T-cell (primary cell): ENCODE measurements at regions of chr11 and their contacts with region 1.

Region 1: DNA sequence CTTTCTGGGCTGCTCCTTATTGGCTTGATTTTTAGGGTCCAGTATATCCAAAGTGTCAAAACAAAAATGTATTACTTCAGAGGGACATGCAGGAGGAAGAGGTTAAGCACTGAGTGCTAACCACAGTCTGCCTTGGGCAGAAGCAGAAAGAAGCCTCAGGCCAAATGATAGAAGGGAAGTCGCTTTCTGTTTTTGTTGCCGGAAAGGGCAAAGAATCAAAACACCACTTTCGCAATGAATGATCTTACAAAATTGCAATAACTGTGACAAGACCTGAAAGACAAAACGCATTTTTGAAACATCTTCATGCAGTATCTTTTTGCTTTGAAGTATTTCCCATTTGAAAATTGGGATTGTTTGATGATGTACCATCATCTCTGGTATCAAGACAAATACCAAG is 70.1 kb upstream of the PICALM start:
- DNase-seq: peak in 9 of 35 experiments; percentile 11 to 44 (median 16)
- ATAC-seq: peak; percentile 58 to 80 (median 66)
- H3K4me3 ChIP-seq: no peak overlapping the region
- H3K4me3 Mint-ChIP-seq: peak overlapping the region; percentile 37 to 62 (median 56)
- H3K27ac ChIP-seq: peak overlapping the region; percentile 59
- H3K27ac Mint-ChIP-seq: peak overlapping the region; percentile 93 to 94
- H3K4me1 ChIP-seq: peaks cover 5 to 34% of the 10 kb centered on the region in 2 experiments
- H3K4me1 Mint-ChIP-seq: peaks cover 12 to 48% (median 46%) of the 10 kb centered on the region in 3 donors
- H3K27me3 ChIP-seq: no peaks in the 10 kb centered on the region
- H3K27me3 Mint-ChIP-seq: no peaks in the 10 kb centered on the region

Region 2: DNA sequence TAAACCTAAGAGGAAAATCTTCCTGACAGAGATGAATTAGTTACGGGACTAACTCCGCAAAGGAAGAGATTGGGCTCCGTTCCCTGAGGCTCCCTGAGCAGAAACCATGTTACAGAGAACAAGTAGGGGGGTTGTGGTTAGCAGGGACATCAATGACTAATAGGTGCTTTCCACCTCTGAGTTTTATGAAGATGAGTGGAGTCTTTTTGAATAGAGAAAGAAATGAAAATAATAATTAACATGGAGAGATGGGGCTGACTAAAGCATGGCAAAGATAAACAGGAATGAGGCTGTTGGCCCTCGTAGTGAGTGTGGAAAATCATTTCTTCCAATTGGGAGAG is 22.6 kb before region 1 on chr11:
- CTCF ChIA-PET with region 1: no interaction called
- POLR2A ChIA-PET with region 1: interaction called in 1 of 2 experiments, 11 read pairs
- DNase-seq: peak in 6 of 35 experiments; percentile 1 to 58 (median 4)
- ATAC-seq: peak; percentile 65 to 81 (median 72)
- H3K4me3 ChIP-seq: no peak overlapping the region
- H3K4me3 Mint-ChIP-seq: peak overlapping the region in 2 of 3 donors; percentile 7 to 28
- H3K27ac ChIP-seq: no peak overlapping the region
- H3K27ac Mint-ChIP-seq: peak overlapping the region; percentile 34 to 56
- H3K4me1 ChIP-seq: peaks cover 0 to 6% of the 10 kb centered on the region in 2 experiments
- H3K4me1 Mint-ChIP-seq: peaks cover 17 to 26% (median 19%) of the 10 kb centered on the region in 3 donors
- H3K27me3 ChIP-seq: no peaks in the 10 kb centered on the region
- H3K27me3 Mint-ChIP-seq: peaks cover 0 to 1% of the 10 kb centered on the region in 2 donors